HEK293 (cell line): ENCODE measurements at regions of chr16 and their contacts with region 1.

Region 1: GRCh38 chr16:66961065-66961744 is at the start of gene CES3:
- H3K4me3 ChIP-seq: peak within 1 kb of the TSS; percentile 36
- H3K27ac ChIP-seq: no peak within 1 kb of the TSS; the same call in 1 of the 2 replicates
- H3K4me1 ChIP-seq: no peaks in the 10 kb centered on the region
- CTCF ChIP-seq: peak; percentile 95

Region 2: DNA sequence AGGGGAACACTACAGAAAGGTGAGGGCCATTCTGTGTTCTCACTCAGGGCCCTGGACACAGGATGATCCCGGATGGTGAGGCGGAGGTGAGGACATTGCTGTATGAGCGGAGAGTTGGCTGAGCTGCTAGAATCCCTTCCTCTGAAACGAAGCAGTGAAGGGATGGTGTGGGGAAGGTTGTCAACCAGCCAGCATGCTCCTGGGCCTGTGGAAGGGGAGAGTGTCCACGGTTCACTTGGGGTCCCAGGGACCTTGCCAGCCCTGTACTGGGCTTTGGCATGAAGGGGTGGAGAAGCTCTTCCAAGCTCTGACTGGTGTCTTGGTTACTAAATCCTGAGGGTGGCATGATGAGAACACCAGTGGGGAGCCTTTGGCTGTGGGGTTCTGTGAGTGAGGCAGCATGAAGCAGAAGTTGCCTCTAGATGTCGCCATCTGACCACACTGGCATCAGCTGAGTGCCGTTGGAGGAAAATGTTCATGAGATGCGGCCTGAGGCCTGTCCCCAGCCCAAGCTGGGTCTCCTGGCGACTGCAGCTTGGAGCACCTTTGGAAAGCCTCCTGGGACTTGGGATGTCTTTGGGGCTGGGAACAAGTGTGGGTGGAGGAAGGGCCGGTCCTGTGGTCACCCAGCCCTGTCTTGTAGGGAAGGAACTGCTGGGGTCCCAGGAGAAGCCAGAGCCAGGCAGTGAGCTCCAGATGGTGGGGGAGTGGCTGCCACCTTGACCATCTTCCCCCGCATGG is 66.1 kb before region 1 on chr16:
- CTCF ChIA-PET with region 1: interaction called, 13 read pairs
- POLR2A ChIA-PET with region 1: interaction called, 3 read pairs
- H3K4me3 ChIP-seq: no peak overlapping the region
- H3K27ac ChIP-seq: no peak overlapping the region
- H3K4me1 ChIP-seq: peaks cover 6% of the 10 kb centered on the region; the same call in 1 of the 2 replicates
- CTCF ChIP-seq: peak; percentile 97

Region 3: DNA sequence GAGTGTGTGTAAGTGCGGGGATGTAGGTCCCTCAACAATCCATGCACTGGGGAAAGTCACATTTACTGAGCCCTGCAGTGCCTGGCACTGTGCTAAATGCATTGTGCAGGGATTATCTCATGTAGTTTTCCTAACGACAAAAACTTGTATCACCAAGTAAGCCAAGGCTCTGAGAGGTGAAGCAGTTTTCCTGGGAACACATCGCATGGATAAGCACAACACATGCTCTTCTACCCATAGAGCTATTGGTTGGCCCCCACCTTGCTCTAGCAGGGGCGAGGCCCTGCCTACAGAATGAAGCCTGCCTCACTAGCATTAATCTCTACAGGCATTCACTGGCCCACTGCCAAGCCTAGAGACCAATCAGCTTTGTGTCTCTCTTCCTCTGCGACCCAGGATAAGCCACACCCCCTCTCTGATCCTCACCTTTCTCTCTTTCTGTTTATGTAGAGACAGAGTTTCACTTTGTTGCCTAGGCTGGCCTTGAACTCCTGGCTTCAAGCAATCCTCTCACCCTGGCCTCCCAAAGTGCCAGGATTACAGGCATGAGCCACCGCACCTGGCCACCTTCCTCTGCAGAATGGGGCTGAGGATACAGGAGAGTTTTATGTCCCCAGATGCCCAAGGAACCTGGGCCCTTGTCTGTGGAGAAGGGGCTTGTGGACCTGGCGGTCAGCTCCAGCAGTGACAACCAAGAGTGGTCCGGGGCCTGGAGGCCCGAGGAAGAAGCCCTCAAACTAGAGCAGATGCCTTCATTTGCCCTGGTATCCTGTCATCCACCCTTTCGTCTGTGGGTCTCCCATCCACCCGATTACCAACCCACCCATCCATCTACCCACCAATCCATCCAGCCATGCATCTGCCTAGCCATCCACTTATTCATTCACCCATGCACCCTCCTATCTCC is 55.3 kb before region 1 on chr16:
- CTCF ChIA-PET with region 1: interaction called, 10 read pairs
- POLR2A ChIA-PET with region 1: interaction called, 5 read pairs
- H3K4me3 ChIP-seq: no peak overlapping the region
- H3K27ac ChIP-seq: peak overlapping the region; percentile 69
- H3K4me1 ChIP-seq: peaks cover 9% of the 10 kb centered on the region
- CTCF ChIP-seq: no peak

Region 4: GRCh38 chr16:66977341-66978113 is 16.3 kb after region 1 on chr16:
- CTCF ChIA-PET with region 1: interaction called, 33 read pairs
- POLR2A ChIA-PET with region 1: interaction called, 7 read pairs
- H3K4me3 ChIP-seq: no peak overlapping the region
- H3K27ac ChIP-seq: no peak overlapping the region
- H3K4me1 ChIP-seq: no peaks in the 10 kb centered on the region
- CTCF ChIP-seq: peak; percentile 98

Region 5: DNA sequence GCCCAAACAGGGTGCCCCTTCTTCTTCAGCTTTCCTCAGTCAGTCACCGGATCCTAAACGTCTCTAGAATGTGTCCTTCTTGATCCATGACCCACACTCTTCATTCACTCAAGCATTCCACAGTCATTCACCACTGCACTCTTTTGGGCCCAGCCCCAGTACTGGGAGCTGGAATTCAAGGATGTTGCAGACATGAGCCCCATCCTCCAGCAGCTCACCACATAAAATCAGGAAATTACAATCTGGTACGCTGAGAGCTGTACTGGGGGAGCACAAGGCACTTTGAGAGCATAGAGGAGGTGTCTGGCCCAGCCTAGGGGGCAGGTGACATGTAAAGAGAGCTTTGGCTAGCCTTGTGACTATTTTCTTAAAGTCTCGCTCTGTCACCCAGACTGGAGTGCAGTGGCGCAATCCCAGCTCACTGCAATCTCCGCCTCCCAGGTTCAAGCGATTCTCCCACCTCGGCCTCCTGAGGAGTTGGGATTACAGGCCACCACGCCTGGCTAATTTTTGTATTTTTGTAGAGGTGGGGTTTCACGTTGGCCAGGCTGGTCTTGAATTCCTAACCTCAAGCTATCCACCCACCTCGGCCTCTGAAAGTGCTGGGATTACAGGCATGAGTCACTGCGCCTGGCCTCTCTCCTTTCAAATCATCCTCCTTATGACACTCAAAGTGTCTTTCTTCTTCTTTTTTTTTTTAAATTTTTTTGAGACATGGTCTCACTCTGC is 45.9 kb after region 1 on chr16:
- CTCF ChIA-PET with region 1: interaction called, 10 read pairs
- POLR2A ChIA-PET with region 1: no interaction called
- H3K4me3 ChIP-seq: no peak overlapping the region
- H3K27ac ChIP-seq: no peak overlapping the region
- H3K4me1 ChIP-seq: no peaks in the 10 kb centered on the region
- CTCF ChIP-seq: no peak

Region 6: GRCh38 chr16:67055712-67056487 is 94.7 kb after region 1 on chr16:
- CTCF ChIA-PET with region 1: no interaction called
- POLR2A ChIA-PET with region 1: no interaction called
- H3K4me3 ChIP-seq: no peak overlapping the region
- H3K27ac ChIP-seq: no peak overlapping the region
- H3K4me1 ChIP-seq: no peaks in the 10 kb centered on the region
- CTCF ChIP-seq: no peak

Region 7: DNA sequence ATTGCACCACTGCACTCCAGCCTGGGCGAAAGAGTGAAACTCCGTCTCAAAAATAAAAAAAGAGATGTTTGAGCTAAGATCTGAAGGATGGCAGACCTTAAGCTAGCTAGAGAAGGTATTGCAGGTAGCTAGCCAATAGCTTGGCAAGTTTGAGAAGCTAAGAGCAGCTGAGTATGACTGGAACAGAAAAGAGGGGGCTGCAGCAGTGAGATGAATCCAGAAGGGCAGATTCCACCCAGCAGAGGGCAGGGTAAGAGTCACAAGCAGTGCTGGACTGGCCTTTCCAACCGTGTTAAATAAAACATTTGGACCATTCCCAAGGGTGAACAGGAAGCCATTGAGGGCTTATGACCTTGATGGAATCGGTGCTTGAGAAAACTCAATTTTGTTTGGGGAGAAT is 142.9 kb after region 1 on chr16:
- CTCF ChIA-PET with region 1: interaction called, 11 read pairs
- POLR2A ChIA-PET with region 1: no interaction called
- H3K4me3 ChIP-seq: no peak overlapping the region
- H3K27ac ChIP-seq: no peak overlapping the region
- H3K4me1 ChIP-seq: peaks cover 5% of the 10 kb centered on the region; the same call in 1 of the 2 replicates
- CTCF ChIP-seq: no peak

Region 8: GRCh38 chr16:67177743-67178699 is 216.8 kb after region 1 on chr16:
- CTCF ChIA-PET with region 1: interaction called, 3 read pairs
- POLR2A ChIA-PET with region 1: interaction called, 10 read pairs
- H3K4me3 ChIP-seq: peak overlapping the region; percentile 31
- H3K27ac ChIP-seq: peak overlapping the region; percentile 37; the same call in 1 of the 2 replicates
- H3K4me1 ChIP-seq: peaks cover 15% of the 10 kb centered on the region
- CTCF ChIP-seq: peak; percentile 75